CD4-positive, alpha-beta memory T cell (primary cell): ENCODE measurements at regions of chr3 and their contacts with region 1.

Region 1: DNA sequence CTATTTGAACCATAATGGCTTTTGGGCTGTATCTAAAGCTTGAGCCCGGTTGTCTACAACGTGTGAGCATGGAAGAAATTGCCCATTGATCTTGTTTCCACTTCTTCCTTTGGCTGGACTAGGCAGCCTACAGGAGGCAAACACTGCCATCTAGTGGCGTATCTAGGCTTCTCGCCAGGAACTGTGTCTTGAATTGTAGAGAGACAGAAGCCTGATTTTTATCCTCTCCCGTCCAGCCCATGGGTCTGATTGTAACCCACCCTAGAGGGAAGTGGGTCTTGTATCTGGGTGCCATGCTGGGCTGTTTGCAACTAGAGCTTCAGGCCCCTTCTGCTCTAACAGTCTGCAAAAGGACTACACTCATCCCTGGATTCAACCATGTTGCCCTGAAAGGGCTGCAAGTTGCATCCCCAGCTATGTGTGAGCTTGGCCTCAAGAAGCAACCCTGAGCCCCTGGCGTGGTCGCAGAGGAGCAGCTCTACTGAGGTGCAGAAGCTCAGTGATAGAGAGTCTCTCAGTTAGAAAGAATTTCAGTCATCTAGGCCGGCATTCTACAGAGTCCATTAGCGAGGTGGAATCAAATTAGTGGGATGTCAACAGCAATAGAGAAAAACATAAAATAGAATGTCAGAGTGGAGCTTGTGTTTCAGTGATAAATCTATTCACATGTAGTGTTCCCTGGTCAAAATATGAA is 170.2 kb upstream of the UMPS start:
- DNase-seq: peak; percentile 34 to 51 (median 47)
- H3K4me3 ChIP-seq: no peak overlapping the region
- H3K4me3 Mint-ChIP-seq: no peak overlapping the region
- H3K27ac ChIP-seq: no peak overlapping the region
- H3K27ac Mint-ChIP-seq: no peak overlapping the region
- H3K4me1 ChIP-seq: no peaks in the 10 kb centered on the region
- H3K4me1 Mint-ChIP-seq: peaks cover 0 to 1% (median 0%) of the 10 kb centered on the region in 4 donors
- H3K27me3 ChIP-seq: peaks cover under 1% of the 10 kb centered on the region
- H3K27me3 Mint-ChIP-seq: peaks cover 18 to 45% of the 10 kb centered on the region in 2 donors

Region 2: GRCh38 chr3:124395584-124396338 is 164.3 kb before region 1 on chr3:
- CTCF ChIA-PET with region 1: no interaction called
- POLR2A ChIA-PET with region 1: no interaction called
- intact Hi-C with region 1: no loop called
- DNase-seq: no peak
- H3K4me3 ChIP-seq: no peak overlapping the region
- H3K4me3 Mint-ChIP-seq: no peak overlapping the region
- H3K27ac ChIP-seq: no peak overlapping the region
- H3K27ac Mint-ChIP-seq: no peak overlapping the region
- H3K4me1 ChIP-seq: no peaks in the 10 kb centered on the region
- H3K4me1 Mint-ChIP-seq: no peaks in the 10 kb centered on the region
- H3K27me3 ChIP-seq: no peaks in the 10 kb centered on the region
- H3K27me3 Mint-ChIP-seq: peaks cover 5 to 12% of the 10 kb centered on the region in 2 donors

Region 3: DNA sequence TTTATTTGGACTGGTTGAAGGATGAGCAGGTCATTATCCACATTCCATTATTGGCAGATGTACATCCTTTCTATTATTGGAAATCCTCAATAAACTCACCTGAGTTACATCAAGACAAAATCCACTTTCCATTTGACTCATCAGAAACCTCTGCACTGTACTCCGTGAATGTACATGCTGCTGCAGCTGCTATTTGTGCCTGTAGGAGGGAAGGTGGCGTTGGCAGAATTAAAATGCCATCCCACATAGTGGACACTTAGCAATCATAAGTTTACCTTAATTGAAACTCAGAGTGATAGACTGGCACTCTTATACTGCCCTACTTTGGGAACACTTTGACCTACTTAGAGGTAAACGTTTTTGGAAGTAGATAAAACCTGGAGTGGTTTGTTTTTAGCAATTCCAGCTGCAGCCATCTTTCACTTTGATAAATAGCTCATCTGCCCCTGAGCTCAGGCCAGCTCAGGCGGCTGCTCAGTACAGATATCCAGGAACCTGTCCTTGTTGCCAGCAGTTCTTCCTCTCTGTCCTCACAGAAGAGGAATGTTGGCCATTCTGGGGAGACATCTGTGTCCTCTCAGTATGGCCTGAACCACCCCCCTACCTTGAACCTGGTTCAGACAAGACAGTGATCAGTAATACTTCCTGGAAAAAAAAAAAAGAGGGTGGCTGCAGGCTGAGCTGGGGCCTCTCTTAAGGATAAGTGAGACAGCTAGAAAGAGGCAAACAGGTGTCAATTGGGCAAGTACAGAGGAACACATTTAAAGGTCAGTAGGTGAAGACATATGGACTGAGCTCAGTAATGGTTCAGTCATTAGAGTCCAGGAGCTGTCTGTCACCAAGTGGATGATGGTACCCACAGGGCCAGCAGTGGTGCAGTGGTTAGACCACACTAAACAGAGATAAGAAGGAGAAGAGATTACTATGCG is 16.8 kb after region 1 on chr3:
- CTCF ChIA-PET with region 1: interaction called, 84 read pairs
- POLR2A ChIA-PET with region 1: no interaction called
- intact Hi-C with region 1: no loop called
- DNase-seq: no peak
- H3K4me3 ChIP-seq: no peak overlapping the region
- H3K4me3 Mint-ChIP-seq: no peak overlapping the region
- H3K27ac ChIP-seq: no peak overlapping the region
- H3K27ac Mint-ChIP-seq: peak overlapping the region in 2 of 7 donors; percentile 7 to 58
- H3K4me1 ChIP-seq: no peaks in the 10 kb centered on the region
- H3K4me1 Mint-ChIP-seq: peaks cover 0 to 1% (median 0%) of the 10 kb centered on the region in 4 donors
- H3K27me3 ChIP-seq: no peaks in the 10 kb centered on the region
- H3K27me3 Mint-ChIP-seq: peaks cover 0 to 4% of the 10 kb centered on the region in 2 donors

Region 4: DNA sequence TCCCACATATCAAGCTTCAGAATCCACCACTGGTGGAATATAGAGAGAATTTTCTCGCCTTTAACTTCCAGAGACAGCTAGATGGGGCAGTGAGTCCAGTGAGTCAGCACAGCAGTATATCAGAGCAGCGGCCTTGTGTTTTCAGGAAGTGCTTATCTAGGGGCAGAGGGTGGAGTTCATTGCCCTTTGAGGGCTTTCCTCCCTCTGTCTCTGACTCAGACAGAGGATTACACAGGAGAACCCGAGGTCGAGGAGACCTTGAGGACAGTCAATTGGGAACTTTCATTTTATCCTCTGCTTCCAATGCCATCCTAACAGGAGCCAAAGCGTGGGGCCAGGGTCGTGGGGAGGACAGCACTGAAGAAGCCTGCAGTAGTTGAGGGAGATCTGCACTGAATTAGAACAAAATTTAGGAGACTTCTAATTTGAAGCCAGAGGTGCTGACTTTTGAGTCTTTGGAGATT is 60.6 kb after region 1 on chr3:
- CTCF ChIA-PET with region 1: interaction called, 10 read pairs
- POLR2A ChIA-PET with region 1: no interaction called
- intact Hi-C with region 1: no loop called
- DNase-seq: peak in 4 of 5 donors; percentile 9 to 19 (median 16)
- H3K4me3 ChIP-seq: peak overlapping the region in 1 of 2 donors; percentile 43
- H3K4me3 Mint-ChIP-seq: peak overlapping the region; percentile 65 to 85 (median 80)
- H3K27ac ChIP-seq: peak overlapping the region; percentile 36
- H3K27ac Mint-ChIP-seq: peak overlapping the region; percentile 62 to 95 (median 89)
- H3K4me1 ChIP-seq: peaks cover 23% of the 10 kb centered on the region
- H3K4me1 Mint-ChIP-seq: peaks cover 25 to 47% (median 32%) of the 10 kb centered on the region in 4 donors
- H3K27me3 ChIP-seq: no peaks in the 10 kb centered on the region
- H3K27me3 Mint-ChIP-seq: no peaks in the 10 kb centered on the region

Region 5: DNA sequence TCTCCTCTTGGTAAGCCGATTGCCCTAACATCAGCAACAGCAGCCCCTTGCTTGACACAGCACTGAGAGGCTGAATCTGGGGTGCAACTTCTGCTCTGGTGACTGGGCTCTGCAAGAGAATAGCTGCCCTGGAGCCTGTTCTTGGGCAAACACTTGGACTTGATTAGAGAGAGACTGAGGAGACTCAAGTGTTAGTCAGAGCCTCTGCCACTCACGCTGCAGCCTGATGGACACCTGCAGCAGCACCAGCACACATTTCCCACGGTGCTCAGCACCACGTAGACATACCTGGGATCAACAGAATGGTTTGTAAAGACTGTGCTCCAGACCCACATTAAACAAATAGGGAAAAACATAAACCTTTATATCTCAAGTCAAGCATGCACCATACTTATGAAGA is 134.5 kb after region 1 on chr3:
- CTCF ChIA-PET with region 1: interaction called, 264 read pairs
- POLR2A ChIA-PET with region 1: interaction called, 4 read pairs
- intact Hi-C with region 1: loop called (anchors 1 kb)
- DNase-seq: no peak
- H3K4me3 ChIP-seq: no peak overlapping the region
- H3K4me3 Mint-ChIP-seq: no peak overlapping the region
- H3K27ac ChIP-seq: no peak overlapping the region
- H3K27ac Mint-ChIP-seq: no peak overlapping the region
- H3K4me1 ChIP-seq: no peaks in the 10 kb centered on the region
- H3K4me1 Mint-ChIP-seq: no peaks in the 10 kb centered on the region
- H3K27me3 ChIP-seq: no peaks in the 10 kb centered on the region
- H3K27me3 Mint-ChIP-seq: peaks cover 4% of the 10 kb centered on the region in 2 donors